PC-9 (cell line): ENCODE measurements at regions of chr7 and their contacts with region 1.

Region 1: DNA sequence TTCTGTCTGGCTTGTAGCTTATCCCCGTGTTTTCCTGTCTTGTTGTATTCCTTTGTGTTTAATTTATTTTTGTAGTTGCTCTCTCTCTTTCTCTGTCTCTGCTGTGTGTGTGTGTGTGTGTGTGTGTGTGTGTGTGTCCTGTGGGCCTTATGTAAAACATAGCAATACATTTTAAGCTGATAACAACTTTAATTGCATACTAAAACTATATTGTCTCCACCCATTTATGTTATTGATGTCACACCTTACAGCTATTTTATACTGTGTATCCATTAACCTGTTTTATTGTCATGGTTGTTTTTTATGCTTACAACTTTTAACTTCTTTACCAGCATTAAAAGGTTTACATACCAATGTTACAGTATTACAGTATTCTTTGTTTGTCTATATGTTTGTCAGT is 293.6 kb downstream of the SUGCT start:
- DNase-seq: no peak
- H3K4me3 ChIP-seq: no peak overlapping the region
- H3K27ac ChIP-seq: no peak overlapping the region
- H3K4me1 ChIP-seq: no peaks in the 10 kb centered on the region
- H3K27me3 ChIP-seq: no peaks in the 10 kb centered on the region
- CTCF ChIP-seq: no peak

Region 2: DNA sequence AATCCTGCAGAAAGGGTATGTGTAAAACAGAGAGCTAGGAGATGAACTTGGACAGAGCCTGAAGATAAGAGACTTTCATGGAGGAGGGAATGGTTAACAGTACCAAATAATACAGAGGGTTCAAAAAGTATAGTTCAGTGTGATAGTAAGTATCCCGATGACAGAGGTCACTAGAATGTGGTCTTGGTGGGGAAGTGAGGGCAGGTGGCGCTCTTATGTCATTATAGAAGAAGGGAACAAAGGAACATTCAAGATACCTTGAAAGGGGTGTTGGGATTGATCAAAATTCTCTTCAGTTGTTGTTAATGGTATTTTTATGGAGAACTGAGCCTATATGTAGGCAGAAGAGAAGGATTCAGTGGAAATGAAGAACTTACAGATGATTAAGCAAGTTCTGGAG is 18.9 kb after region 1 on chr7:
- CTCF ChIA-PET with region 1: no interaction called
- POLR2A ChIA-PET with region 1: no interaction called
- intact Hi-C with region 1: no loop called
- DNase-seq: no peak
- H3K4me3 ChIP-seq: no peak overlapping the region
- H3K27ac ChIP-seq: no peak overlapping the region
- H3K4me1 ChIP-seq: no peaks in the 10 kb centered on the region
- H3K27me3 ChIP-seq: no peaks in the 10 kb centered on the region
- CTCF ChIP-seq: 0 out of 2 replicates have a peak, but pooled peaks have one; percentile 27

Region 3: GRCh38 chr7:40516376-40516775 is 88.0 kb after region 1 on chr7:
- CTCF ChIA-PET with region 1: interaction called, 14 read pairs
- POLR2A ChIA-PET with region 1: no interaction called
- intact Hi-C with region 1: no loop called
- DNase-seq: no peak
- H3K4me3 ChIP-seq: no peak overlapping the region
- H3K27ac ChIP-seq: no peak overlapping the region
- H3K4me1 ChIP-seq: no peaks in the 10 kb centered on the region
- H3K27me3 ChIP-seq: no peaks in the 10 kb centered on the region
- CTCF ChIP-seq: no peak